K562 (cell line): ENCODE measurements at regions of chr6 and their contacts with region 1.

Region 1: DNA sequence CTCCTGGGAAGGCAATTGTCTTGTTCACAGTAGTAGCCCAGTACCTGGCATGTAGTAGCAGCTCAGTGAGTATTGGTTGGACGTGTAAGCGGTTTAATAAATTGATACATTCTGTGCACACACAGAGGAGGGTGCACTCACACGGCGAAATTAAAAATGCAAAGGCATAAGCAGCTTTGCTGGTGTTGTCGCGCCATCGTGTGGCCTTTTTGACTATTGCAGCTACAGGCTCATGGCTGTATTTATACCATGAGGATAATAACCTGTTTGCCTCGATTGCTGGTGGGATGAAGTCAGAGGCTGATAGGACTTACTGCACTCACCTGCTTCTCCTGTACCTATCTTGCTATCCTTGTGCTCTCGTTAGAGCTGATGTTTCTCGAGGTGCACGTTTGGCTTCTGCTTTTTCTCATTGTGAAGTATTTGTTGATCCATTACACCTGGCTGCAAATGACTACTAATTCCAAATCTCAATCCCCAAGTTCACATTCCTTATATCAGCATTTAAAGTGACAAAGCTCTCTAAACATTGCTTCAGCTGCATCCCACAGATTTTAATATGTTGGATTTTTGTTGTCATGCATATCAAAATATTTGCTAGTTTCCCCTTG is 61.5 kb downstream of the TBXT start:
- DNase-seq: peak; percentile 56 to 75 (median 67)
- ATAC-seq: peak; percentile 95
- H3K4me3 ChIP-seq: no peak overlapping the region
- H3K27ac ChIP-seq: no peak overlapping the region
- H3K4me1 ChIP-seq: no peaks in the 10 kb centered on the region
- H3K27me3 ChIP-seq: no peaks in the 10 kb centered on the region
- CTCF ChIP-seq: peak; percentile 85 to 97 (median 91)
- EP300 ChIP-seq: no peak
- POLR2A ChIP-seq: no peak
- RAD21 ChIP-seq: peak; percentile 88 to 95

Region 2: DNA sequence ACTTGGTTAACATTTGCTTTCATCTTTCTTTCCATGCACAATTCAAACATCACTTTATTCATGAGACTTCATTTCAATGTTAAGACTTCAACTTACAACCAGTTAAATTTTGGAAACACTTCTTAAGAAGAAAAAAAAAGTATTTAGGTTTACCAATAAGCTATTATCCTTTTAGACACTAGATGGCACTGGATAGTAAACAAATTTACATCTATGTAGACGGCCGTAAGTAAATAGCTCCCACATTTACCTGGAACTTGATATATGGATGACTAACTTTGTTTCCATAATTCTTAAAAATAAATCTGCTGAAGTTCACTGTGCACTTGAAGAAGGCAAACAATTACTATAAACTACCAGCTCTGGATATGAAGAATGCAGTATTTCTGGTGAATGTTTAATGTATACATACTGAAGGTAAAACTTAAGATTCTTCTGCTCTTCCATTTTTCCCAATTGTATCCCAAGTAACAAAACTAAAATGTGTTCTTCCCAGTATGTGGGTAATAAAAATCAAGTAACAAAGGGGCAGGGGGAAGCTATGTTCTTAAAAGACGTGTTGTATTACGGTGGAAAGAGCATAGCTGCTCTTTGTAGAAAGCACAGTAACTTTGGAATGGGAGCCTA is 666.1 kb before region 1 on chr6:
- CTCF ChIA-PET with region 1: no interaction called
- POLR2A ChIA-PET with region 1: no interaction called
- in situ Hi-C with region 1: no loop called
- intact Hi-C with region 1: loop called (anchors 10 kb)
- DNase-seq: peak in 1 of 4 experiments; percentile 20
- ATAC-seq: no peak
- H3K4me3 ChIP-seq: no peak overlapping the region
- H3K27ac ChIP-seq: no peak overlapping the region
- H3K4me1 ChIP-seq: no peaks in the 10 kb centered on the region
- H3K27me3 ChIP-seq: no peaks in the 10 kb centered on the region
- CTCF ChIP-seq: peak in 2 of 3 experiments; percentile 32 to 50; a peak in 2 of 6 replicates
- EP300 ChIP-seq: no peak
- POLR2A ChIP-seq: no peak
- RAD21 ChIP-seq: peak; percentile 59 to 61

Region 3: GRCh38 chr6:165729307-165729936 is 376.8 kb before region 1 on chr6:
- CTCF ChIA-PET with region 1: interaction called, 3 read pairs
- POLR2A ChIA-PET with region 1: no interaction called
- in situ Hi-C with region 1: no loop called
- intact Hi-C with region 1: loop called (anchors 5 kb)
- DNase-seq: peak; percentile 55 to 85 (median 79)
- ATAC-seq: peak; percentile 86
- H3K4me3 ChIP-seq: no peak overlapping the region
- H3K27ac ChIP-seq: no peak overlapping the region
- H3K4me1 ChIP-seq: no peaks in the 10 kb centered on the region
- H3K27me3 ChIP-seq: peaks cover 0 to 18% of the 10 kb centered on the region in 2 experiments; a peak in 1 of 5 replicates
- CTCF ChIP-seq: peak; percentile 62 to 80 (median 78)
- EP300 ChIP-seq: no peak
- POLR2A ChIP-seq: no peak
- RAD21 ChIP-seq: peak; percentile 58 to 62

Region 4: GRCh38 chr6:165884813-165885765 is 221.1 kb before region 1 on chr6:
- CTCF ChIA-PET with region 1: interaction called, 18 read pairs
- POLR2A ChIA-PET with region 1: no interaction called
- in situ Hi-C with region 1: no loop called
- intact Hi-C with region 1: loop called (anchors 1 kb)
- DNase-seq: peak; percentile 78 to 82 (median 80)
- ATAC-seq: peak; percentile 100
- H3K4me3 ChIP-seq: no peak overlapping the region
- H3K27ac ChIP-seq: no peak overlapping the region
- H3K4me1 ChIP-seq: no peaks in the 10 kb centered on the region
- H3K27me3 ChIP-seq: no peaks in the 10 kb centered on the region; a peak in 1 of 5 replicates
- CTCF ChIP-seq: peak; percentile 89 to 95 (median 92)
- EP300 ChIP-seq: no peak
- POLR2A ChIP-seq: no peak
- RAD21 ChIP-seq: peak; percentile 74 to 87

Region 5: GRCh38 chr6:165895421-165896165 is 210.6 kb before region 1 on chr6:
- CTCF ChIA-PET with region 1: interaction called, 3 read pairs
- POLR2A ChIA-PET with region 1: no interaction called
- in situ Hi-C with region 1: loop called (anchors 5 kb)
- intact Hi-C with region 1: no loop called
- DNase-seq: no peak
- ATAC-seq: peak; percentile 44; the same call in 1 of the 3 replicates
- H3K4me3 ChIP-seq: no peak overlapping the region
- H3K27ac ChIP-seq: no peak overlapping the region
- H3K4me1 ChIP-seq: no peaks in the 10 kb centered on the region
- H3K27me3 ChIP-seq: peaks cover 0 to 16% of the 10 kb centered on the region in 2 experiments; a peak in 1 of 5 replicates
- CTCF ChIP-seq: no peak
- EP300 ChIP-seq: no peak
- POLR2A ChIP-seq: no peak
- RAD21 ChIP-seq: no peak

Region 6: DNA sequence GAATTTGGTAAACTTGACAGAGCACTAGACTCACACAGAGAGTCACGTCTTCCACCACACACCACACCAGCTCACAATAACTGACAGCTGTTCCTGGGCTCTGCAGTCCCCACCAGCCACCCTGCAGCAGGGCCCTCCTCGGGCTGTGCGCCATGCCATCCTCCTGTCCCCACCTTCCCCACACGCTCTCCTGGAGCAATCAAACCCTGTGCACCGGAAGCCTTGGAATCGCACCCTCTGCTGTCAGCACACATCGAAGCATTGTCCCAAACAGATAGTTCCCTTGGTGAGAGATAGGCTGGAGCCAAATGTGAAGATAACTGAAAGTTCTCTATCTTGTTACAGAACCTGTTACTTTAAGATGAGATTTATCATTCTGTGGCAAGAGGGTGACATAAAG is 129.5 kb before region 1 on chr6:
- CTCF ChIA-PET with region 1: no interaction called
- POLR2A ChIA-PET with region 1: no interaction called
- in situ Hi-C with region 1: no loop called
- intact Hi-C with region 1: no loop called
- DNase-seq: no peak
- ATAC-seq: peak; percentile 51; the same call in 2 of the 3 replicates
- H3K4me3 ChIP-seq: no peak overlapping the region
- H3K27ac ChIP-seq: no peak overlapping the region
- H3K4me1 ChIP-seq: no peaks in the 10 kb centered on the region
- H3K27me3 ChIP-seq: peaks cover 0 to 4% of the 10 kb centered on the region in 2 experiments; a peak in 1 of 5 replicates
- CTCF ChIP-seq: no peak
- EP300 ChIP-seq: no peak
- POLR2A ChIP-seq: no peak
- RAD21 ChIP-seq: no peak

Region 7: DNA sequence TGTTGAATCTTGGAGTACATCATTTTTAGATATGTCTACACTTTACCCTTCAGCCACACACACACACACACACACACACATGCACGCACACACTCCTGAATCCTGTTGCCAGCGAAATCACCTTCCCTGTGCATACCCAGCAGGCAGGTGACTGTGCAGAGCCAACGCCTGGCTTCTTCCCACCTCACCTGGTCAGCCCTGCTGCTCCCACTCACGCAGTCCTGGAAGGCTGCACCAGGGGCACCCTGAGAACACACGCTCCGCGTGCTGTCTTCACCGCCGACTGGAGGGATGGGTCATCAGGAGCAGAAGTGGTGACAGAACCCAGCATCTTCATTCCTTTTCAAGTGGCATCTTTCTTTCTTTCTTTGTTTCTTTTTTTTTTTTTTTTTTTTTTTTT is 33.1 kb before region 1 on chr6:
- CTCF ChIA-PET with region 1: no interaction called
- POLR2A ChIA-PET with region 1: no interaction called
- in situ Hi-C with region 1: no loop called
- intact Hi-C with region 1: no loop called
- DNase-seq: no peak
- ATAC-seq: no peak; the same call in 2 of the 3 replicates
- H3K4me3 ChIP-seq: no peak overlapping the region
- H3K27ac ChIP-seq: no peak overlapping the region
- H3K4me1 ChIP-seq: 0 out of 5 replicates have a peak, but pooled peaks cover 0 to 3% of the 10 kb centered on the region in 2 experiments
- H3K27me3 ChIP-seq: peaks cover 0 to 5% of the 10 kb centered on the region in 2 experiments; a peak in 1 of 5 replicates
- CTCF ChIP-seq: no peak
- EP300 ChIP-seq: no peak
- POLR2A ChIP-seq: no peak
- RAD21 ChIP-seq: no peak

Region 8: DNA sequence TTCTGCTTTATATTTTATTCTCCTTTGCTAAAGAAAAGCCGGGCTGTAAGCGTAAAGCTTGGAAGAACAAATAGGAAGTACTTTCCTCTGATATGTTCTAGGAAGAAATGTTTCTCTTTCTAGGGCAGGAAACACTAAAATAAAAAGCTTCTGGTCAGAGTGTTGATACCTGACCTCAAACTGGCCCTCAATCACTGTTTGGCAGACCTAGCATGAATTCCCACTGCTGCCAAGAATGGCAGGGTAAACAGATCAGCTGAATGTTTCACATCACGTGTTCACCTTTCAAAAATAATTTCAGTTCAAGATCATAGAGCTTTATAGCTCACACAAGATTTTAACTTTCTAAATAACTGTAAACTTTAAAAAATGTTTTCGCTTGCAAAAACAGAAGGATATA is 273.6 kb after region 1 on chr6:
- CTCF ChIA-PET with region 1: no interaction called
- POLR2A ChIA-PET with region 1: no interaction called
- in situ Hi-C with region 1: no loop called
- intact Hi-C with region 1: no loop called
- DNase-seq: no peak
- ATAC-seq: no peak
- H3K4me3 ChIP-seq: no peak overlapping the region
- H3K27ac ChIP-seq: no peak overlapping the region
- H3K4me1 ChIP-seq: peaks cover 3 to 20% of the 10 kb centered on the region in 2 experiments; a peak in 2 of 5 replicates
- H3K27me3 ChIP-seq: no peaks in the 10 kb centered on the region
- CTCF ChIP-seq: no peak
- EP300 ChIP-seq: no peak
- POLR2A ChIP-seq: no peak
- RAD21 ChIP-seq: no peak